ENCODE measurements at regions of chr16 and their contacts with region 1.

Region 1: GRCh38 chr16:78967948-78968347 is 632.6 kb downstream of the MAF start:
- DNase-seq: no peak
- H3K4me3 ChIP-seq: no peak overlapping the region
- H3K27ac ChIP-seq: no peak overlapping the region
- H3K4me1 ChIP-seq: 0 out of 2 replicates have a peak, but pooled peaks cover 4% of the 10 kb centered on the region
- H3K27me3 ChIP-seq: no peaks in the 10 kb centered on the region
- CTCF ChIP-seq: no peak

Region 2: DNA sequence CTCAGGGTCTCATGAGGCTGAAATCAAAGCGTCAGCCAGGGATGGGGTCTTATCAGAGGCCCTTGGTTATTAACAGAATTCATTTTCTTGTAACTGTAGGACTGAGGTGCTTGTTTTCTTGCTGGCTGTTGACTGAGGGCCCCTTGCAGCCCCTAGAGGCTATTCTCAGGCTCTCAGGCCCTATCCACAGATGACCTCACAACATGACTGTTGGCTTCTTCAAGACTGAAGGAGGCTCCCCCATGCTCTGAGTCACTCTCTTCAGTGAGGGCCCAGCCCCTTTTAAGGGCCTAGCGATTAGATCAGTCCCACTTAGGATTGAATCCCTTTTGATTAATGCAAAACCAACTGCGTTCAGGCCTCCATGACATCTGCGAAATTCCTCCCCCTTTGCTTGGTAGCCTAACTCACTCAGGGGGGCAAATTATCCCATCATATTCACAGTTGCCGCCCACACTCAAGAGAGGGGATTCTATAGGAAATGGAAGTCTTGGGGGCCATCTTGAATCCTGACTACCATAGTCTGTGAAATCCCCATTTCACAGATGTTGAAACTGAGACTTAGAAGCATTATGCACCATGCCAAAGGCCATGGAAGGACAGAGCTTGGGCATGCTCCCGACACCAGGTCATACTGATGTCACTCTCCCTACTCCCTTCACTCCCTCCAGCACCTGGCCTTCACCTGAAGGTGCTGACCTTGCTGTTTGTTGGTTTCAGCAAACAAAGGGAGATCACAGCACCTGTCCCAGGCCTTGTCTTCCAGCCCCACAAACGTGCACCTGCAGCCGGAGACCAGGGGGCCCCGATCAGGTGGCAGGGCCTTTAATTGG is 40.3 kb after region 1 on chr16:
- CTCF ChIA-PET with region 1: no interaction called
- POLR2A ChIA-PET with region 1: no interaction called
- intact Hi-C with region 1: loop called (anchors 2 kb)
- DNase-seq: peak in 1 of 2 experiments; percentile 45
- H3K4me3 ChIP-seq: no peak overlapping the region
- H3K27ac ChIP-seq: peak overlapping the region; percentile 84
- H3K4me1 ChIP-seq: peaks cover 21% of the 10 kb centered on the region
- H3K27me3 ChIP-seq: no peaks in the 10 kb centered on the region
- CTCF ChIP-seq: no peak

Measured in PC-9 (cell line).